Mucosa of descending colon (tissue), 3 donors: ENCODE measurements at regions of chr11 and their contacts with region 1.

Region 1: GRCh38 chr11:132126973-132127899 is 756.8 kb downstream of the NTM start:
- DNase-seq: peak in 1 of 3 donors; percentile 64
- ATAC-seq: no peak
- H3K4me3 ChIP-seq: no peak overlapping the region
- H3K4me1 ChIP-seq: no peaks in the 10 kb centered on the region
- CTCF ChIP-seq: no peak

Region 2: DNA sequence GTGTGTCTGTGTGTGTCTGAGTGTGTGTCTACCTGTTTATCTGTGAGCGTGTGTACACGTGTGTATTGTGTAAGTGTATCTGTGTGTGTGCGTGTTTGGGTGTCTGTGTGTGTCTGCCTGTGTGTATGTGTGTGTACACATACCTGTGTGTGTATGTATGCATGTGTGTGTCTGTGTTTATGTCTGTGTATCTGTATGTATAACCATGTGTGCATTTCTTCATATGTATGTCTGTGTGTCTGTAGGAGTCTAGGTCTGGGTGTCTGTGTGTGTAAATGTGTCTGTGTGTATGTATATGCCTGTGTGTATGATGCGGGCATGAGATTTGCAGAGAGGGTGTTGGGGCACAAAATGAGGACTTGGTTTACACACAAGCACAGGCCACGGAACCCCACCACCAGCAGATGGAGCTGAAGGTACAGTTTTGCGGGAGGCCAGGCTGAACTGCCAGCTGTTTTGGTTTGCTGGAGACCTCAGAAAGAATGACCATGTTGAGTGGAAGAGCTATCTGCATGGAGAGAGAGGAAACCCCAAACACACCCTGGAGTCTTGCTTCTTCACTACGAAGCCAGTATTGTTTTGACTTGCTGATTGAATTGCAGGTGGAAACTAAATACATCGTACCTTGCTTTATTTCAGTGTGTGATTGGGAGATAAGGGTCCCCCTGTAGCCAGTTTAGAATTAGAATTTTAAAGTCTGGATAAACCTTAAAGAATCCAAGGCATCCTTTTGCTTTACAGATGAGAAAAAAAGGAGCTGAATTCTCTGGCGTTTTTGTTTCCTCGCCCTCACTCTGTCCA is 259.6 kb before region 1 on chr11:
- intact Hi-C with region 1: loop called in 1 of 2 experiments (anchors 10 kb)
- DNase-seq: peak in 2 of 3 donors; percentile 43 to 66
- ATAC-seq: peak; percentile 27
- H3K4me3 ChIP-seq: no peak overlapping the region
- H3K4me1 ChIP-seq: no peaks in the 10 kb centered on the region
- CTCF ChIP-seq: no peak